ENCODE measurements at regions of chr13 and their contacts with region 1.

Region 1: GRCh38 chr13:49976314-49977258 is 20.3 kb upstream of the TRIM13 start:
- DNase-seq: peak; percentile 53 to 88 (median 78)
- ATAC-seq: peak; percentile 89
- H3K4me3 ChIP-seq: no peak overlapping the region
- H3K4me3 Mint-ChIP-seq: no peak overlapping the region
- H3K27ac ChIP-seq: no peak overlapping the region
- H3K27ac Mint-ChIP-seq: no peak overlapping the region
- H3K4me1 ChIP-seq: no peaks in the 10 kb centered on the region
- H3K4me1 Mint-ChIP-seq: no peaks in the 10 kb centered on the region
- H3K27me3 ChIP-seq: no peaks in the 10 kb centered on the region
- H3K27me3 Mint-ChIP-seq: no peaks in the 10 kb centered on the region
- CTCF ChIP-seq: peak; percentile 70

Region 2: DNA sequence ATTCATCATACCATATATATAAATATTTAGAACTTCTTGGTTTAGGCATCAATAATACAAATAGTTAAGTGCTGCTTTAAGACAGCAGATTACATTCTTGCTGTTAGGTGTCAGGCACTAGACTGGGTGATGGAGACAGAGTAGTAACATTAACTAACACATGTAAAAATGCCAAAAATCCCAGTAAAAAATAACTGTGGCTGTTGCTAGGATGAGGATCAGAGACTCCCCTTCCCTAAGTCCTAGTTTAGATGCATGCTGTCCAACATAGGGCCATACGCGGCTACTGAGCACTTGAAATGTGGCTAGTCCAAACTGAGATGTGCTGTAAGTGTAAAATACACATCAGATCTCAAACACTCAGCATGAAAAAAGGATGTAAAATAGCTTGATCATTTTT is 634.1 kb before region 1 on chr13:
- CTCF ChIA-PET with region 1: no interaction called
- POLR2A ChIA-PET with region 1: no interaction called
- intact Hi-C with region 1: no loop called
- DNase-seq: no peak
- ATAC-seq: no peak
- H3K4me3 ChIP-seq: no peak overlapping the region
- H3K4me3 Mint-ChIP-seq: no peak overlapping the region
- H3K27ac ChIP-seq: no peak overlapping the region
- H3K27ac Mint-ChIP-seq: no peak overlapping the region
- H3K4me1 ChIP-seq: no peaks in the 10 kb centered on the region
- H3K4me1 Mint-ChIP-seq: peaks cover 7% of the 10 kb centered on the region
- H3K27me3 ChIP-seq: no peaks in the 10 kb centered on the region
- H3K27me3 Mint-ChIP-seq: no peaks in the 10 kb centered on the region
- CTCF ChIP-seq: no peak

Region 3: DNA sequence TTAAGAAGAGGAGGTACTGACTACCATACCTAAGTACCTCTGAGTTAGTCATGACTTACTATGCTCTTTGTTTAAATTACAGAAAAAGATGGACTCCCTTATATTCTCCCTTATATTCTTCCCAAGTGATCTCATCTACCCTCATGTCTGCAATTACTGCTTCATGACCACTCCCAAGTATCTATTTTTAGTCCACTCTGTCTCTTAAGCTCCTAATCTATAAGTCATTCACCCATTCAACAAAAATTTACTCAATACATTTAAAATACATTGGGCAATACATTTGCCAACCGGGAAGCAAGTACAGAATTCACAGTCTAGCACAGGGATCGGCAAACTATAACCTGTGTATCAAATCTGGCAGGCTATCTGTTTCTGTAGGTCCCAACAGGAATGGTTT is 226.7 kb before region 1 on chr13:
- CTCF ChIA-PET with region 1: no interaction called
- POLR2A ChIA-PET with region 1: no interaction called
- intact Hi-C with region 1: no loop called
- DNase-seq: no peak
- ATAC-seq: no peak
- H3K4me3 ChIP-seq: no peak overlapping the region
- H3K4me3 Mint-ChIP-seq: no peak overlapping the region
- H3K27ac ChIP-seq: no peak overlapping the region
- H3K27ac Mint-ChIP-seq: no peak overlapping the region
- H3K4me1 ChIP-seq: no peaks in the 10 kb centered on the region
- H3K4me1 Mint-ChIP-seq: peaks cover 46% of the 10 kb centered on the region
- H3K27me3 ChIP-seq: no peaks in the 10 kb centered on the region
- H3K27me3 Mint-ChIP-seq: no peaks in the 10 kb centered on the region
- CTCF ChIP-seq: no peak

Region 4: GRCh38 chr13:50268500-50268899 is 291.9 kb after region 1 on chr13:
- CTCF ChIA-PET with region 1: interaction called, 11 read pairs
- POLR2A ChIA-PET with region 1: no interaction called
- intact Hi-C with region 1: no loop called
- DNase-seq: no peak
- ATAC-seq: no peak
- H3K4me3 ChIP-seq: no peak overlapping the region
- H3K4me3 Mint-ChIP-seq: no peak overlapping the region
- H3K27ac ChIP-seq: no peak overlapping the region
- H3K27ac Mint-ChIP-seq: no peak overlapping the region
- H3K4me1 ChIP-seq: no peaks in the 10 kb centered on the region
- H3K4me1 Mint-ChIP-seq: no peaks in the 10 kb centered on the region
- H3K27me3 ChIP-seq: no peaks in the 10 kb centered on the region
- H3K27me3 Mint-ChIP-seq: no peaks in the 10 kb centered on the region
- CTCF ChIP-seq: no peak

Region 5: DNA sequence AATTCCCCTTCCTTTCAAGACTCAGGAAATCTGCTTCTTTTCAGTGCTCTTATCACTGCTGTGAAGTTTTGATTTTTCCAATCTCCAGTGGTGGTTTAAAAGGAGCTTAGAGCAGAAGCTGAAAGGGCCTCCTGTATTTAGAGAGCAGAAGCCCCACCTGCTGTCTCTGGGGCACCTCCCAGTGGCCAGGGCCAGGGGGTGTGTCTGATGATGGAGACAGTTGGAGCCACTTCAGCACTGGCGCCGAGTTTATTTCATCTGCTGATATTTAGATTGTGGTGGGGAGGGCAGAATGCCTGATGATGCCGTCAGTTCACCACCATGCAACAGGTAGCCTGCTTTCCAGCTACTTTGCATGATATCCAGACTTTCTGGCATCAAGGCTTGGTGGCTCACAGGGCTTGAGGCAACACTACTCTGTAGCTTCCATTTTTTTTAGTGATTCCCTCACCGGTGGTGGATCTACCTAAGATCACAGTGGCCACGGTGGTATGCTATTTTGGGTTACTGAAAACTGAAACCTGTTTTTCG is 410.5 kb after region 1 on chr13:
- CTCF ChIA-PET with region 1: no interaction called
- POLR2A ChIA-PET with region 1: no interaction called
- intact Hi-C with region 1: loop called in 1 of 2 experiments (anchors 10 kb)
- DNase-seq: peak in 7 of 9 experiments; percentile 12 to 52 (median 42)
- ATAC-seq: peak; percentile 78
- H3K4me3 ChIP-seq: no peak overlapping the region
- H3K4me3 Mint-ChIP-seq: no peak overlapping the region
- H3K27ac ChIP-seq: no peak overlapping the region
- H3K27ac Mint-ChIP-seq: no peak overlapping the region
- H3K4me1 ChIP-seq: no peaks in the 10 kb centered on the region
- H3K4me1 Mint-ChIP-seq: peaks cover 21% of the 10 kb centered on the region
- H3K27me3 ChIP-seq: no peaks in the 10 kb centered on the region
- H3K27me3 Mint-ChIP-seq: no peaks in the 10 kb centered on the region
- CTCF ChIP-seq: no peak

Region 6: DNA sequence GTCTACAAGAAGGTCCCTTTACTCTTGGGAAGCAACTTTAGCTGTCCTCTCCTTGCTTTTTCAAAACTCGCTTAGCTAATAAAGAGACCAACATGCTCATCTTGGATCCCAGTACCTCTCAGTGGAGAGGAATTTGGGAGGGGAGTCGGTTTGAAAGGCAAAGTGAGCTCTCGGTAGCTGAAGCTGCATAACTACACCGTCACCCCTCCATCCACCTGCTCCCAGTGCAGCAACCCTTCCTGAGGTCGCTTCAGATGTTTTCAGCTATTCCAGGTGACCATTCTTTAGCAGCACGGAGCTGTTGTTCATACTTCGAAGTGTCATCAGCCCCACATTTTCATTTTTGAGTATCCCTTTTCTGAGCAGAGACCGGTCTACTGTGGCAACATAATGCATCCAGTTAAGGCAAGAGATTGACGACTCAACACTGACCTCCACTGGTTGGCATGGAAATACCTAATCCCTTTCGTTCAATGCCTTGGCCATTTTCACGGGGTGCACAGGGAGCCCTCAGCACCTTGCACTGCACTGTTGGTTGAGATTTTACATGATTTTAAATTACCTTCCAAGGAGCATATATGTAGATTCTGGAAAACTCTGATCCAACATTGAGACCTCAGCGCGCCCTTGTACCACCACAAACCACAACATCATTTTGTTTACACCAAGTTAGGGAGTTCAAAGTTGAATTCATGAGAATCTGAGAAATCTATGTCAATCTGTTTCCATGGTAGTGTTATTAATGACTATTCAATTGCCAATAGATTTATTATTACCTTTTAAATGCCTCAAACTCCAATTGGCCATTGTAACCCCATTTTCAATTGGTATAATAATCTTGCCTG is 824.7 kb after region 1 on chr13:
- CTCF ChIA-PET with region 1: interaction called, 28 read pairs
- POLR2A ChIA-PET with region 1: no interaction called
- intact Hi-C with region 1: loop called in 1 of 2 experiments (anchors 1 kb)
- DNase-seq: peak; percentile 25 to 82 (median 57)
- ATAC-seq: peak; percentile 96
- H3K4me3 ChIP-seq: no peak overlapping the region
- H3K4me3 Mint-ChIP-seq: no peak overlapping the region
- H3K27ac ChIP-seq: no peak overlapping the region
- H3K27ac Mint-ChIP-seq: no peak overlapping the region
- H3K4me1 ChIP-seq: no peaks in the 10 kb centered on the region
- H3K4me1 Mint-ChIP-seq: peaks cover 5% of the 10 kb centered on the region
- H3K27me3 ChIP-seq: no peaks in the 10 kb centered on the region
- H3K27me3 Mint-ChIP-seq: no peaks in the 10 kb centered on the region
- CTCF ChIP-seq: peak; percentile 70

Region 7: GRCh38 chr13:51286135-51287002 is 1309.8 kb after region 1 on chr13:
- CTCF ChIA-PET with region 1: interaction called, 4 read pairs
- POLR2A ChIA-PET with region 1: no interaction called
- intact Hi-C with region 1: loop called in 1 of 2 experiments (anchors 5 kb)
- DNase-seq: peak; percentile 24 to 77 (median 57)
- ATAC-seq: peak; percentile 67
- H3K4me3 ChIP-seq: no peak overlapping the region
- H3K4me3 Mint-ChIP-seq: no peak overlapping the region
- H3K27ac ChIP-seq: no peak overlapping the region
- H3K27ac Mint-ChIP-seq: no peak overlapping the region
- H3K4me1 ChIP-seq: no peaks in the 10 kb centered on the region
- H3K4me1 Mint-ChIP-seq: no peaks in the 10 kb centered on the region
- H3K27me3 ChIP-seq: no peaks in the 10 kb centered on the region
- H3K27me3 Mint-ChIP-seq: no peaks in the 10 kb centered on the region
- CTCF ChIP-seq: peak; percentile 78

Measured in CD8-positive, alpha-beta T cell (primary cell).